HepG2 (cell line): ENCODE measurements at regions of chr14 and their contacts with region 1.

Region 1: DNA sequence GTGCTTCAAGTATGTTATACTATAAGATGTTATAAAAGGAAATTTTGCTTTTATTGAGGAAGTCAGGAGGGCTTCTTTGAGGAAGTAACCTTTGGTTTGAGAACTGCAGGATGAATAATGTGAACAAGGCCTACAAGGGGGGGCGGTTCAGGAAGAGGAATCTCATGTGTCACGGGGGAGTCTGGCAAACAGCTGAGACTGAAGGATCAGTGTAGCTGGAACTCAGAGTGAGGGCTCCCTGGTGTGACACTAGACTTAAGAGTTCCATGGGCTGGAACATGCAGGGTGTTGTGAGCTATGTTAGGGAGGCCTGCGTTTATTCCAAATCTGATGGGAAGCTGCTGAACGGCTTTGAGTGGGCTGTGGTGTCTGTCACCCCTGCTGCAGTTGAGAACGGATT is 62.3 kb downstream of the UNC79 start:
- DNase-seq: no peak
- ATAC-seq: no peak
- H3K4me3 ChIP-seq: no peak overlapping the region
- H3K27ac ChIP-seq: no peak overlapping the region
- H3K4me1 ChIP-seq: 0 out of 2 replicates have a peak, but pooled peaks cover 4% of the 10 kb centered on the region
- H3K27me3 ChIP-seq: no peaks in the 10 kb centered on the region
- CTCF ChIP-seq: no peak
- EP300 ChIP-seq: no peak
- POLR2A ChIP-seq: no peak
- RAD21 ChIP-seq: no peak

Region 2: GRCh38 chr14:93532541-93532940 is 39.5 kb after region 1 on chr14:
- CTCF ChIA-PET with region 1: no interaction called
- POLR2A ChIA-PET with region 1: no interaction called
- in situ Hi-C with region 1: no loop called
- intact Hi-C with region 1: loop called (anchors 1 kb)
- DNase-seq: no peak
- ATAC-seq: no peak
- H3K4me3 ChIP-seq: no peak overlapping the region
- H3K27ac ChIP-seq: no peak overlapping the region
- H3K4me1 ChIP-seq: no peaks in the 10 kb centered on the region
- H3K27me3 ChIP-seq: peaks cover 0 to 1% of the 10 kb centered on the region in 2 experiments; a peak in 2 of 5 replicates
- CTCF ChIP-seq: no peak
- EP300 ChIP-seq: no peak
- POLR2A ChIP-seq: no peak
- RAD21 ChIP-seq: no peak